Gastrocnemius medialis (tissue), 4 donors: ENCODE measurements at regions of chrX and their contacts with region 1.

Region 1: GRCh38 chrX:111467896-111468295 is 43.5 kb upstream of the SERTM2 start:
- DNase-seq: peak; percentile 1 to 11
- ATAC-seq: no peak
- H3K4me3 ChIP-seq: no peak overlapping the region
- H3K27ac ChIP-seq: no peak overlapping the region
- H3K4me1 ChIP-seq: no peaks in the 10 kb centered on the region
- H3K27me3 ChIP-seq: no peaks in the 10 kb centered on the region
- CTCF ChIP-seq: no peak
- POLR2A ChIP-seq: no peak

Region 2: DNA sequence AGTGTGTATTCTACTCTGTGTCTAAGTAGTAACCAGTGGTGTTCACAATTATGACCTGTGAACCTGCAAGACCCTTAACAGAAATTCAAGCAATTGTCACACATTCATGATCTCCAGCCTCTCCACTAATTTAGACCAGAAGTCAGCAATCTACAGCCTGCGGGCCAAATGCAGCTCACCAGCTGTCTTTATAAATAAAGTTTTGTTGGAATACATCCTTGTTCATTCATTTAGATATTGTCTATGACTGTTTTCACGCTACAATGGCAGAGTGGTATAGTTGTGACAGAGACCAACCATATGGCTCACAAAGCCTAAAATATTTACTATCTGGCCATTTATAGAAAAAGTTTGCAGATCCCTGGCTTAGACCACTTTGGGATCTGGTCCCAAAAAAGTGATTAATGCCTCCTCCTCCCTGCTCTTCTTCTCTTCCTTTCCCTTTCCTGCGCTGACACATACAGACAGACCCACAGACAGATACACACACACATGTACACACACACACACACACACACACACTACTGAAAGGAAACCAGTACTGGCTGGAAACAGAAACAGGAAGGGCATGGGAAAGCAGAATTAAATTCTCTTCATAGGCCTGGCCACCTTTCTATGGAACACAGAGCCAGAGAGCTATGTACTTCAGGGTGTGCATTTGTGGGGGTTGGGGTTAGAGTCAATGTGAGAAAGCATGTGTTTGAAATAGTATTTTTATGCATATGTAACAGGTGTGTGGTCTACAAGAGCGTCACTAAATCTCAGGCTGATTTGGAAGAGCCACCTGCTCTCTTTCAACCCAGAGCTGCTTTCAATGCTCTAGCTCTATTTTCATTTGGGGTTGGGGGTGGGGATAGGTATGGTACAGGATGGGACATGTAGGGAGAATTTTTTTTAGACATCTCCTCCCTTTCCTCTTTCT is 1514.7 kb before region 1 on chrX:
- in situ Hi-C with region 1: no loop called
- intact Hi-C with region 1: no loop called
- DNase-seq: no peak
- ATAC-seq: no peak
- H3K4me3 ChIP-seq: no peak overlapping the region
- H3K27ac ChIP-seq: peak overlapping the region; percentile 48 to 75 (median 65)
- H3K4me1 ChIP-seq: peaks cover 3 to 4% of the 10 kb centered on the region in 2 donors
- H3K27me3 ChIP-seq: no peaks in the 10 kb centered on the region
- CTCF ChIP-seq: no peak
- POLR2A ChIP-seq: no peak

Region 3: GRCh38 chrX:111521169-111521568 is 53.3 kb after region 1 on chrX:
- in situ Hi-C with region 1: loop called in 1 of 4 experiments (anchors 10 kb)
- intact Hi-C with region 1: no loop called
- DNase-seq: no peak
- ATAC-seq: no peak
- H3K4me3 ChIP-seq: no peak overlapping the region
- H3K27ac ChIP-seq: no peak overlapping the region
- H3K4me1 ChIP-seq: no peaks in the 10 kb centered on the region
- H3K27me3 ChIP-seq: peaks cover 0 to 2% (median 0%) of the 10 kb centered on the region in 3 donors
- CTCF ChIP-seq: no peak
- POLR2A ChIP-seq: no peak

Region 4: DNA sequence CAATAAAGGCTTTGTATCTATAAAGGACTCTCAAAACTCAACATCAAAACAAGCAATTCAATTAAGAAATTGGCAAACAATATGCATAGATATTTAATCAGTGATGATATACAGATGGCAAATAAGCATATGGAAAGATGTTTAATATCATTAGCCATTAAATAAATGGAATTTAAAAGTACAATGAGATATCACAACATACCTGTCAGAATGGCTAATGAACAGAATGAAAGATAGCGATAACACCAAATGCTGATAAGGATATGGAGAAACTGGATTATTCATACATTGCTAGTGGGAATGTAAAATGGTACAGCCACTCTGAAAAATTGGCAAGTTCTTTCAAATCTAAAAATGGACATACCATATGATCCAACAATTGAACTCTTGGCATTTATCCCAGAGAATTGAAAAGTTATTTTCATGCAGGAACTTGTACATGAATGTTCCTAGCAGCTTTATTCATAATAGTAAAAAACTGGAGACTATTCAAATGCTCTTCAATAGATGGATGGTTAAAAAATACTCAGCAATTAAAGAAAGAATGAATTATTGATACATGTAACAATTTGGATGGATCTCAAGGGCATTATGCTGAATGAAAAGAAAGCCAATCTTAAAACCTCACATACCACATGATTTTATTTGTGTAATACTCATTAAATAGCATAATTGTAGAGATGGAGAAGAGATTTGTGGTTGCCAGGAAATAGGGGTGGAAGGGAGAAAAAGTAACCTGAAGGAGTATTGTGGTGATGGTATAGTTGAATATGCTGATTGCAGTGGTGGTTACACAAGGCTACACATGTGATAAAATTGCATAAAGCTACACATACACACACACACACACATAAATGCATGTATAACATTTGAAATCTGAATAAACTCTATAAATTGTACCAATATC is 167.2 kb after region 1 on chrX:
- in situ Hi-C with region 1: no loop called
- intact Hi-C with region 1: no loop called
- DNase-seq: no peak
- ATAC-seq: no peak
- H3K4me3 ChIP-seq: no peak overlapping the region
- H3K27ac ChIP-seq: no peak overlapping the region
- H3K4me1 ChIP-seq: no peaks in the 10 kb centered on the region
- H3K27me3 ChIP-seq: peaks cover 0 to 3% (median 0%) of the 10 kb centered on the region in 3 donors
- CTCF ChIP-seq: no peak
- POLR2A ChIP-seq: no peak